B cell (primary cell): ENCODE measurements at regions of chr5 and their contacts with region 1.

Region 1: GRCh38 chr5:126538579-126538978 is 56.4 kb downstream of the ALDH7A1 start:
- DNase-seq: no peak
- ATAC-seq: no peak
- H3K4me3 ChIP-seq: no peak overlapping the region
- H3K4me3 Mint-ChIP-seq: no peak overlapping the region
- H3K27ac ChIP-seq: no peak overlapping the region
- H3K27ac Mint-ChIP-seq: no peak overlapping the region
- H3K4me1 ChIP-seq: no peaks in the 10 kb centered on the region
- H3K4me1 Mint-ChIP-seq: no peaks in the 10 kb centered on the region
- H3K27me3 ChIP-seq: no peaks in the 10 kb centered on the region
- H3K27me3 Mint-ChIP-seq: no peaks in the 10 kb centered on the region
- CTCF ChIP-seq: no peak

Region 2: DNA sequence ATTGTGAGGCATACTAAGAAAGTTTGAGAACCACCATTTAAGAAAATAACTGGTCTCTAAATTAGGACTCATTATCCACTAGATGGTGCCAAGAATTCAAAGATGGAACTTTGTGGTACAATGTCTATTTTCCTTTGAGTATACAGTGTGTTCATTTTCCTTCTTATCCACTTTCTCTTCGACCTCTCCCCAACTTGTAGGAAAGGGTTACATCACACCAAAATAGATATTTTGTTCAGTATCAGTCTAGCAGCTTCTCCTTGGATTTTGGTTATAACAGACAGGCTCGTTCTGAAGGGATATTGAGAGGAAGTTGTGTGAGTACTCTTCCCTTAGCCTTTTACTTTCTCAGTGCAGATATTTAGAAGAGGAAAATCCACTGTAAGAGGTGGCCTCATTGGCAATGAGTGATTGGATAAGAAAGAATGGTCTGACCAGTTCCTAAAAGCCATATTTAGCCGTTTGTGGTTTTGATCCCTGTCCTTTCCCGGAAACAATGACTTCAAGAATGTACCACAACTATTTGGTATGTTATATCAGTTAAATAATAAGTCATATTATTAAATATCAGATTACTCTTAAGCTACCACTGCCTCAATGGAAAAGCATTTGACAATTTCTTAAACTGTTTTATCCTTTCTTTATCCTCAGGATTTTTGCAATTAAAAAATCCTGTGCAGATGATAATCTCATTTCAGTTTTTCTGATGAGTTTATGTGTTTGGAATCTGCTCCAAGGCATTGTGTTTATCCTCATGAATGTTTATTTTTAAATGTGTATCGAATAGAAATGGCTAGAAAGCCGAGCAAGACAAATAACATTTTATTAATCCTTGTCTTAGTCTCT is 184.3 kb before region 1 on chr5:
- CTCF ChIA-PET with region 1: interaction called, 23 read pairs
- POLR2A ChIA-PET with region 1: no interaction called
- intact Hi-C with region 1: no loop called
- DNase-seq: peak; percentile 20
- ATAC-seq: no peak
- H3K4me3 ChIP-seq: no peak overlapping the region
- H3K4me3 Mint-ChIP-seq: no peak overlapping the region
- H3K27ac ChIP-seq: no peak overlapping the region
- H3K27ac Mint-ChIP-seq: no peak overlapping the region
- H3K4me1 ChIP-seq: no peaks in the 10 kb centered on the region
- H3K4me1 Mint-ChIP-seq: peaks cover 4% of the 10 kb centered on the region
- H3K27me3 ChIP-seq: peaks cover 0 to 3% (median 0%) of the 10 kb centered on the region in 4 experiments
- H3K27me3 Mint-ChIP-seq: peaks cover 14% of the 10 kb centered on the region
- CTCF ChIP-seq: peak; percentile 13

Region 3: DNA sequence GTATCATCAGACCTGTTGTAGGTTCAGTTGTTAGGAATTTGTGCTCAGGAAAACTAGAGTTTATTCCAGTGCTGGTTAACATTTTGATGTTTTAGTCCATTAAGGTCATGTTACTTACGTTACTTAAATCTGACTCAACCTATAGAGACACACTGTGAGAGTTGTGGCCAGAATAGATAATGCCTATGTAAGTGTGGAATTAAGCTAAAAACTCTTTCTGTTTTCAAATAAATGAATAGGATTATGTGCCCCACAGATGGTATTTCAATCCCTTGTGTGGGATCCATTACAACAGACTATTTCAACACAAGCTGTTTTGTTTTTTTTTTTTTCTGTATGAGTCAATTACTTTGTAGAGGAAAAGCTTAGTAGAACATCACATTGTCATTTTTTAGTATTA is 820.2 kb after region 1 on chr5:
- CTCF ChIA-PET with region 1: no interaction called
- POLR2A ChIA-PET with region 1: no interaction called
- intact Hi-C with region 1: no loop called
- DNase-seq: no peak
- ATAC-seq: no peak
- H3K4me3 ChIP-seq: no peak overlapping the region
- H3K4me3 Mint-ChIP-seq: no peak overlapping the region
- H3K27ac ChIP-seq: no peak overlapping the region
- H3K27ac Mint-ChIP-seq: no peak overlapping the region
- H3K4me1 ChIP-seq: no peaks in the 10 kb centered on the region
- H3K4me1 Mint-ChIP-seq: no peaks in the 10 kb centered on the region
- H3K27me3 ChIP-seq: no peaks in the 10 kb centered on the region
- H3K27me3 Mint-ChIP-seq: peaks cover 22% of the 10 kb centered on the region
- CTCF ChIP-seq: no peak